ENCODE measurements at regions of chr11 and their contacts with region 1.

Region 1: GRCh38 chr11:124800226-124800929 is at the start of gene MSANTD2:
- DNase-seq: peak; percentile 96
- H3K4me3 Mint-ChIP-seq: peak within 1 kb of the TSS; percentile 95
- H3K27ac Mint-ChIP-seq: peak within 1 kb of the TSS; percentile 90
- H3K4me1 Mint-ChIP-seq: peaks cover 21% of the 10 kb centered on the region
- H3K27me3 Mint-ChIP-seq: peaks cover 16% of the 10 kb centered on the region
- total RNA-seq, gene MSANTD2: 10.6 TPM in 2 replicates

Region 2: GRCh38 chr11:124724979-124725718 is 75.2 kb before region 1 on chr11:
- intact Hi-C with region 1: no loop called
- DNase-seq: no peak
- H3K4me3 Mint-ChIP-seq: no peak overlapping the region
- H3K27ac Mint-ChIP-seq: no peak overlapping the region
- H3K4me1 Mint-ChIP-seq: no peaks in the 10 kb centered on the region
- H3K27me3 Mint-ChIP-seq: peaks cover 48% of the 10 kb centered on the region

Region 3: GRCh38 chr11:124746621-124747243 is 53.6 kb before region 1 on chr11:
- intact Hi-C with region 1: loop called (anchors 1 kb)
- DNase-seq: peak; percentile 92
- H3K4me3 Mint-ChIP-seq: peak overlapping the region; percentile 98
- H3K27ac Mint-ChIP-seq: peak overlapping the region; percentile 95
- H3K4me1 Mint-ChIP-seq: peaks cover 34% of the 10 kb centered on the region
- H3K27me3 Mint-ChIP-seq: peaks cover 22% of the 10 kb centered on the region

Region 4: GRCh38 chr11:124837491-124837856 is 37.1 kb after region 1 on chr11:
- intact Hi-C with region 1: loop called (anchors 2 kb)
- DNase-seq: peak; percentile 64
- H3K4me3 Mint-ChIP-seq: no peak overlapping the region
- H3K27ac Mint-ChIP-seq: no peak overlapping the region
- H3K4me1 Mint-ChIP-seq: peaks cover 13% of the 10 kb centered on the region
- H3K27me3 Mint-ChIP-seq: peaks cover 74% of the 10 kb centered on the region

Region 5: DNA sequence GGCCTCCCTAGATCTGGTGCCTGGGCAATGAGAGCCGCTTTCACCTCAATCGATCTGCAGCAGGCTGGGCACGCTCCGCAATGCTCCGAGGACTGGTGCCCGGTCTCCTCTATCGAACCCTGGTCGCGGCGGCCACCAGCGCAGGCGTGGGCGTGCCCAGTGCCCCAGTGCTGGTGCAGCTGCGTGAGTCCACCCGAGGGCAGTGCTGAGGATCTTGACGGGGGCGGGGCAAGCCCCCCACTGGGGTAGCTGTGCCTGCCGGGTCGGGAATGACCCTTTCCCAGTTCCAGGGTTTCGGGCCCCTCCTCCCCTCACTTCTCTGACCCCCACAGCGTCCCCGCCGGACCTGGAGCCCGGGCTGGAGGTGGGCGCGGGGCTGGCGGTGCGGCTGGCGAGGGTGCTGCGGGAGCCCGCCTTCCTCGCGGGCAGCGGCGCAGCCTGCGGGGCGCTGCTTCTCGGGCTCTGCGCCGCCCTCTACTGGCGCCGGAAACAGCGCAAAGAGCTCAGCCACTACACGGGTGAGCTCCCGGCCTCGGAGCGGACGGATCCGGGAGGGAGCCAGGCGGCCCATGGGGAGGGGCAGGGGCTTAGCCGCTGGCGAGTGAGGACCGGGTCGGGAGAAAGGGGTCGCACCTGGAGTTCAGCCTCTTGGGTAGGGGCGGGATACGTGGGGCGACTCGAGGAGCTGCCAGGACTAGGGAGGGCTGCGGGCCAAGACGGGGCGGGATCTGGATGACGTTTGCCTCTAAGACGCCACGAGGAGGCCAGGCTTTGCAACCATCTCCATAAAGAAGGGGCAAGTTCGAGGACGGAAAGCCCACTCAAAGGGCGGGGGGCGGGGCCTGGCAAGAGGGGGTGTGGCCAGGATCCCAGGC is 75.8 kb after region 1 on chr11:
- intact Hi-C with region 1: loop called (anchors 2 kb)
- DNase-seq: peak; percentile 95
- H3K4me3 Mint-ChIP-seq: peak overlapping the region; percentile 91
- H3K27ac Mint-ChIP-seq: peak overlapping the region; percentile 86
- H3K4me1 Mint-ChIP-seq: peaks cover 11% of the 10 kb centered on the region
- H3K27me3 Mint-ChIP-seq: peaks cover 47% of the 10 kb centered on the region

Region 6: DNA sequence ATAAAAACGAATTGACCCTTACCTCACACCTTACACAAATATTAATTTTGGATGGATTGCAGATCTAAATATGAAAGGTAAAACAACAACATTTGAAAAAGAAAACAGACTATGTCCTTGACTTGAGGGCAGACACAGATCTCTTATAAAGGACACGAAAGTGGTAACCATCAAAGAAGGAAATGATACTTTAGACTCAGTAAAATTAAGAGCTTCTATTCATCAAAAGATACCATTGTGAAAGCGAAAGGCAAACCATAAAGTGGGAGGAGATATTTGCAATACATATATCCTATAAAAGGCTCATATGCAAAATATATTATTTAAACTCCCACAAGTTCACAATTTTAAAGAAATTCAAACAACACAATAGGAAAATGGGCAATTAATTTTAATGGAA is 130.4 kb after region 1 on chr11:
- intact Hi-C with region 1: no loop called
- DNase-seq: no peak
- H3K4me3 Mint-ChIP-seq: peak overlapping the region; percentile 11
- H3K27ac Mint-ChIP-seq: no peak overlapping the region
- H3K4me1 Mint-ChIP-seq: peaks cover 5% of the 10 kb centered on the region
- H3K27me3 Mint-ChIP-seq: peaks cover under 1% of the 10 kb centered on the region

Measured in activated CD4-positive, alpha-beta T cell treated with anti-CD3 and anti-CD28 coated beads, Interleukin-2, amount 10 ng/mL, durations not matched to agents 24 days and 14 days (primary cell).